Activated B cell treated with CpG ODN at 0.5 μM for 24 hours (primary cell): ENCODE measurements at regions of chr16 and their contacts with region 1.

Region 1: DNA sequence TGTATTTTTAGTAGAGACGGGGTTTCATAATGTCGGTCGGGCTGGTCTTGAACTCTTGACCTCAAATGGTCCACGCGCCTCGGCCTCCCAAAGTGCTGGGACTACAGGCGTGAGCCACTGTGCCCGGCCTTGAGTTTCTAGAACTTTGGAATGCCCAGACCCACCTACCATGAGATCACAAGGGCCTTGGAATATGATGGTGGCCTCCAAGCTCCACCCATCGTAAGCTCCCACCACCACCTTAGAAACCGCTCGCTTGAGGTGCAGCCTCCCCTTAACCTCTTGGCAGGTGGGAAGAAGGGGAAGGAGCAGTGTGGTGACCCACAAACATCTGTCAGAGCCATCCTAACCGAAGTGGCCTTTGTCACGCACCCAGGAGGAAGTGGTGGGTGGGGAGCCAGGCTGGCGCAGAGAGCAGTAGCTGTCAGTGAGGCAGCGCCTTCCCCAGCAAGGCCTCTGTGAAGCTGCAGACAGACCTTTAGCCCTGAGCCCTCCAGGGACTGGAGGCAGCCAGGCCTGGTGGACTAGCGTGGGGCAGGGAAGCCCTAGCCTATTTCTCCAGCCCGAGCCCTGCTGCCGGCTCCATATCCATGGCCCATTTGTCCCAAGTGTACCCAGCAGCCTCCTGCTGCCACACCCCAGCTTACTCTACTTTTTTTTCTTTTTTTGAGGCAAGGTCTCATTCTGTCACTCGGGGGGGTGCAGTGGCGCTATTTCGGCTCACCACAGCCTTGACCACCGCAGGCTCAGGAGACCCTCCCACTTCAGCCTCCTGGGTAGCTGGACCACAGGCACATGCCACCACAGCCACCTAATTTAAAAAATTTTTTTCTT is 13.1 kb upstream of the SEPHS2 start:
- DNase-seq: peak; percentile 69
- ATAC-seq: peak; percentile 92
- H3K4me3 Mint-ChIP-seq: peak overlapping the region; percentile 66
- H3K27ac Mint-ChIP-seq: peak overlapping the region; percentile 96
- H3K4me1 Mint-ChIP-seq: peaks cover 65% of the 10 kb centered on the region
- H3K27me3 Mint-ChIP-seq: no peaks in the 10 kb centered on the region
- CTCF ChIP-seq: no peak

Region 2: DNA sequence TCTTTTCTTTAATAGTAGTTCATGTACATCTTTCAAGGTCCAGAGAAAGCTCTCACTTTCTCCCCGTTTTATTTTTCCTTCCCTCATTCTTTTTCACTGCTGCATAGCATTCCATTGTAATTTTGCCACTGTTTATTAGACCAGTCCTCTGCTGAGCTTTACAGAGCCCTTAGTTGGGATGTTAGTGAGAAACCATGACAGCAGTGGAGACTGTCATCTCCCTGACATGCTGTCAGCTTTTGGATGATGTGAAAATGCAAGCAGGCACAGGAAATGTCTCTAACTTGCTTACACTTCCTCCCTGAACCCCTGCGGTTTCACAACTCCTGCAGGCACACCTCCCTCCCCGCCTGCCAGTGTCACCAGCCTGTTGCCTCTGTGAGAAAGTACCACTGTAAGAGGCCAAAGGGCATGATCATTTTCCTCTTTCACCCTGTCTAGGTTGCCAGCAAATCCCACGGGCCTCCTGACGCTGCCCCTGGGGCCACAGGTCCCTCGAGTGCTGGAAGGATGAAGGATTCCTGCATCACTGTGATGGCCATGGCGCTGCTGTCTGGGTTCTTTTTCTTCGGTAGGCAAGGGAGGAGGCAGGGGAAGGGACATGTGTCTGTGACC is 13.7 kb after region 1 on chr16 and contains the start of gene ITGAL:
- CTCF ChIA-PET with region 1: interaction called, 15 read pairs
- POLR2A ChIA-PET with region 1: interaction called, 421 read pairs
- intact Hi-C with region 1: loop called (anchors 1 kb)
- DNase-seq: peak; percentile 59
- ATAC-seq: peak; percentile 65
- H3K4me3 Mint-ChIP-seq: peak within 1 kb of the TSS; percentile 89
- H3K27ac Mint-ChIP-seq: peak within 1 kb of the TSS; percentile 94
- H3K4me1 Mint-ChIP-seq: peaks cover 60% of the 10 kb centered on the region
- H3K27me3 Mint-ChIP-seq: no peaks in the 10 kb centered on the region
- CTCF ChIP-seq: no peak
- total RNA-seq, gene ITGAL: 216 and 240 TPM in 2 replicates

Region 3: GRCh38 chr16:30491744-30492308 is 33.0 kb after region 1 on chr16:
- CTCF ChIA-PET with region 1: no interaction called
- POLR2A ChIA-PET with region 1: interaction called, 10 read pairs
- intact Hi-C with region 1: no loop called
- DNase-seq: no peak
- ATAC-seq: no peak
- H3K4me3 Mint-ChIP-seq: no peak overlapping the region
- H3K27ac Mint-ChIP-seq: peak overlapping the region; percentile 9
- H3K4me1 Mint-ChIP-seq: peaks cover 4% of the 10 kb centered on the region
- H3K27me3 Mint-ChIP-seq: no peaks in the 10 kb centered on the region
- CTCF ChIP-seq: no peak

Region 4: GRCh38 chr16:30557957-30558788 is 99.4 kb after region 1 on chr16 and contains the start of gene ZNF764:
- CTCF ChIA-PET with region 1: no interaction called
- POLR2A ChIA-PET with region 1: interaction called, 11 read pairs
- intact Hi-C with region 1: no loop called
- DNase-seq: peak; percentile 91
- ATAC-seq: peak; percentile 93
- H3K4me3 Mint-ChIP-seq: peak within 1 kb of the TSS; percentile 83
- H3K27ac Mint-ChIP-seq: peak within 1 kb of the TSS; percentile 84
- H3K4me1 Mint-ChIP-seq: peaks cover 43% of the 10 kb centered on the region
- H3K27me3 Mint-ChIP-seq: no peaks in the 10 kb centered on the region
- CTCF ChIP-seq: no peak
- total RNA-seq, gene ZNF764: 16.1 and 19.2 TPM in 2 replicates

Region 5: GRCh38 chr16:30692381-30693064 is 233.7 kb after region 1 on chr16:
- CTCF ChIA-PET with region 1: no interaction called
- POLR2A ChIA-PET with region 1: interaction called, 3 read pairs
- intact Hi-C with region 1: loop called (anchors 5 kb)
- DNase-seq: no peak
- ATAC-seq: no peak
- H3K4me3 Mint-ChIP-seq: no peak overlapping the region
- H3K27ac Mint-ChIP-seq: no peak overlapping the region
- H3K4me1 Mint-ChIP-seq: peaks cover 11% of the 10 kb centered on the region
- H3K27me3 Mint-ChIP-seq: no peaks in the 10 kb centered on the region
- CTCF ChIP-seq: no peak